B cell (primary cell): ENCODE measurements at regions of chr2 and their contacts with region 1.

Region 1: DNA sequence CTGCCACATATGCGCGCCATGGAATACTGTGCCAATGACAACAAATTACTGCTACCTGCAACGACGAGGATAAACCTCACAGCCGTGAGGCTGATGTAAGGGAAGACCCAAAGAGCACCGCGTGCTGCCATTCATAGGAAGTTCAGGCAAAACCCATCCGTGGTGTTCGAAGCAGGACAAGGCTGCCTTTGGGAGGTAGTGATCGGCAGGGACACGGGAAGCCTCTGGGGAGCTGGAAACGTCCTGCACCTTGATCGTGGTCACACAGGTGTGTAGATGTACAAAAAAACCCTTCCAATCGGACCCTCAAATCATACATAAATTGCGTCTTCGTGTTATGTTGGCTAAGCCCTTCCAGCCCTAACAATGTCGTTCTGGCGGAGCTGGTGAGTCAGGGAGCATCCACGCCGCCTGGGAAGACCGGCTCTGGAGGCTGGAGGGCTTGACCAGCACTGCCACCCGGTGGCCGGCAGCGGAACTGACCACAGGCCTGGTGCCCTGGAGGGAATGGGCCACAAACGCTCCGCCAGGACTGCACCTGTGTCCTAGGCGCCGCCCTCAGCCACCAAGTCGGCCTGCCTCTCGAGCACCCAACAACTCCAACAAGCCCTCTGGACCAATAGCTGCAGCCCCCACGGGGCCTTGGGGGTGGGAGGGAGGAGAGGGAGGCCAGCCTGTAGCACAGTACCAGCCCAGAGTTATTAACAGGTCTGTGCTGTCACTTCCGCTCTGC is 4.1 kb upstream of the NEURL3 start:
- DNase-seq: peak; percentile 78
- ATAC-seq: peak; percentile 67
- H3K4me3 ChIP-seq: no peak overlapping the region
- H3K4me3 Mint-ChIP-seq: peak overlapping the region; percentile 78
- H3K27ac ChIP-seq: no peak overlapping the region
- H3K27ac Mint-ChIP-seq: no peak overlapping the region
- H3K4me1 ChIP-seq: peaks cover 18 to 23% of the 10 kb centered on the region in 2 donors
- H3K4me1 Mint-ChIP-seq: peaks cover 18% of the 10 kb centered on the region
- H3K27me3 ChIP-seq: peaks cover 0 to 16% (median 0%) of the 10 kb centered on the region in 4 experiments
- H3K27me3 Mint-ChIP-seq: peaks cover 14% of the 10 kb centered on the region
- CTCF ChIP-seq: peak; percentile 75

Region 2: DNA sequence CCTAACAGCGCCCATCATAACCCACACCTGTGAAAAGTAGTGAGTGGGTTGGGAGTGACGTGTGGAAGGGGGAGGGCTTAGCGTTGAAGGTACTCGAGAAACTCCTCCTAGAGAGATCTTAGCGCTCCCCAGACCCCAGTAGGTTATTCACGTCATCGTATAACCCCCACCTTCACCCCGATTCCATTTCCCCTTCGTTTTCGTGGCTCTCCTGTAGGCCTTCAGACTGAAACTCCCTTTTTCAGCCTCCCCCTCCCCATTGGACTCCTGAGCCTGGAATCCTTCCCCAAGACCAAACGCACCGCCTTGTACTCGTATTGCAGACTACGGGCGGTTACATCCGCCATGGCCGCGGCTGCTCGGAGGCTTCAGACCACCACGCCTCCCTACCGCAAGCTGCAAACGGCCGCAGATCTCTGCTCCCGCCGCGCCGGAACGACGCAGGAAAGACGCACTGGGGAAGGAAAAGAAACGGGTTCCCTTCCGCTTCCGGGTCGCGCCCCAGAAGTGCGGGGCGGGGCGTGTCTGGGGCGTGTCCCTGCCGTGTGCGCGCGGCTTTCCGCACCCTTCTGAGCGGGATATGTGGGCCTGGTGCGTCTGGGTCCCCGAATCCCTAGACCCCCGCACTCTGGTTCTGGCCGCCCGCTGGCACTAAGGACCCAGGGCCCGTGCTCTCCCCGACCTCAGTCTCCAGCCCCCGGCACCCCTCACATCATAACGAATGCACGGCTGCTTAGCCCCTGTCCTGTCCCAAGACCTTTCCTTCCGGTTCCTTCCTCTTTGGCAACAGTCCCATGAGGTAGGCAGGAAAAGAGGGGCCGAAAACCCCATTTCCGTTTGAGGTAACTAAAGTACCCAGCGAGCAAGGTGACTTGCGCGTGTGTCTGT is 203.9 kb before region 1 on chr2 and contains the start of gene SNRNP200:
- CTCF ChIA-PET with region 1: interaction called, 6 read pairs
- POLR2A ChIA-PET with region 1: interaction called, 4 read pairs
- intact Hi-C with region 1: loop called (anchors 1 kb)
- DNase-seq: peak; percentile 93
- ATAC-seq: peak; percentile 96
- H3K4me3 ChIP-seq: peak within 1 kb of the TSS; percentile 70 to 97 (median 80)
- H3K4me3 Mint-ChIP-seq: peak within 1 kb of the TSS; percentile 99
- H3K27ac ChIP-seq: peak within 1 kb of the TSS; percentile 89 to 91
- H3K27ac Mint-ChIP-seq: peak within 1 kb of the TSS; percentile 99
- H3K4me1 ChIP-seq: peaks cover 18 to 22% of the 10 kb centered on the region in 2 donors
- H3K4me1 Mint-ChIP-seq: peaks cover 51% of the 10 kb centered on the region
- H3K27me3 ChIP-seq: no peaks in the 10 kb centered on the region
- H3K27me3 Mint-ChIP-seq: no peaks in the 10 kb centered on the region
- CTCF ChIP-seq: no peak
- total RNA-seq, gene SNRNP200: 214 and 216 TPM in 2 replicates

Region 3: GRCh38 chr2:96407041-96407918 is 102.0 kb before region 1 on chr2:
- CTCF ChIA-PET with region 1: interaction called, 155 read pairs
- POLR2A ChIA-PET with region 1: no interaction called
- intact Hi-C with region 1: loop called (anchors 1 kb)
- DNase-seq: peak; percentile 79
- ATAC-seq: peak; percentile 88
- H3K4me3 ChIP-seq: peak overlapping the region in 1 of 5 experiments; percentile 6
- H3K4me3 Mint-ChIP-seq: no peak overlapping the region
- H3K27ac ChIP-seq: no peak overlapping the region
- H3K27ac Mint-ChIP-seq: no peak overlapping the region
- H3K4me1 ChIP-seq: peaks cover 7 to 9% of the 10 kb centered on the region in 2 donors
- H3K4me1 Mint-ChIP-seq: peaks cover 9% of the 10 kb centered on the region
- H3K27me3 ChIP-seq: no peaks in the 10 kb centered on the region
- H3K27me3 Mint-ChIP-seq: peaks cover 3% of the 10 kb centered on the region
- CTCF ChIP-seq: peak; percentile 85

Region 4: GRCh38 chr2:96470636-96471035 is 38.6 kb before region 1 on chr2:
- CTCF ChIA-PET with region 1: interaction called, 7 read pairs
- POLR2A ChIA-PET with region 1: no interaction called
- intact Hi-C with region 1: loop called (anchors 2 kb)
- DNase-seq: peak; percentile 58
- ATAC-seq: peak; percentile 61
- H3K4me3 ChIP-seq: no peak overlapping the region
- H3K4me3 Mint-ChIP-seq: no peak overlapping the region
- H3K27ac ChIP-seq: no peak overlapping the region
- H3K27ac Mint-ChIP-seq: no peak overlapping the region
- H3K4me1 ChIP-seq: peaks cover 3 to 6% of the 10 kb centered on the region in 2 donors
- H3K4me1 Mint-ChIP-seq: peaks cover 2% of the 10 kb centered on the region
- H3K27me3 ChIP-seq: peaks cover 0 to 13% (median 8%) of the 10 kb centered on the region in 4 experiments
- H3K27me3 Mint-ChIP-seq: peaks cover 7% of the 10 kb centered on the region
- CTCF ChIP-seq: peak; percentile 75

Region 5: DNA sequence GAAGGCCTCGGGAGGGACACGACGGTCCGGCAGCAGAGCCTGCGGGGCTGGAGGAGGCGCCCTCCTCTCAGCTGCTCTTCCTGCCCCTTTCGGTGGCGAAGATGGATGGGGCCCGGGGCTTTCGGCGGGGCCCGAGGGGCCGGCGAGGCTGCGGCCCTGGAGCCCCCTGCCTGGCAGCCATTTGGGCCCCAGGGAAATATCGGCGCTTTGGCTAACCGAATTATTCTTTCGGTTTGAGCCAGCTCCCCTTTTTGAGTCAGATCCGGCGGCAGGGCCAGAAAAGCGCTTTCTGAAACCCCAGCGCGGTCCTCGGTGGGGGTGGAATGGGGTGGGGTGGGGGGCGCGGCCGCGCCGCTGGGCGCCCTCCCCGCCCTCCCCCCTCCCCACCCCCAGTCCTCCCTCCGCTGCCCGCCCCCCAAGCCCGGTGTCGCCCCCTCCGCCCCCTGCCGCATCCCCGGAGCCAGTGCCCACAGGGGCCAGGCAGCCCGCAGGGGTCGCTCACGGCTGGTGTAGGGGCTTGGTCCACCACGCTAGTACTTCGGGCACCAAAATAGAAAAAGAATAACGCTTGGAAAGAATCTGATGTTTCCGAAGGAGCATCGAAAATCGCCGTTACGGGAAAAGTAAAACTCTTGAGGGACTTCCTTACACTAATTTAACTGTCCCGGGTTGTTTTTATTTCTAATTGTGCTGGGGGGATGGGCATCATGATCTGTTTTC is 18.2 kb after region 1 on chr2:
- CTCF ChIA-PET with region 1: interaction called, 15 read pairs
- POLR2A ChIA-PET with region 1: no interaction called
- intact Hi-C with region 1: no loop called
- DNase-seq: peak; percentile 66
- ATAC-seq: peak; percentile 32
- H3K4me3 ChIP-seq: peak overlapping the region; percentile 31 to 75 (median 64)
- H3K4me3 Mint-ChIP-seq: peak overlapping the region; percentile 87
- H3K27ac ChIP-seq: peak overlapping the region in 1 of 2 donors; percentile 60
- H3K27ac Mint-ChIP-seq: peak overlapping the region; percentile 78
- H3K4me1 ChIP-seq: peaks cover 21 to 47% of the 10 kb centered on the region in 2 donors
- H3K4me1 Mint-ChIP-seq: peaks cover 48% of the 10 kb centered on the region
- H3K27me3 ChIP-seq: peaks cover 0 to 17% (median 0%) of the 10 kb centered on the region in 4 experiments
- H3K27me3 Mint-ChIP-seq: peaks cover 4% of the 10 kb centered on the region
- CTCF ChIP-seq: peak; percentile 50

Region 6: DNA sequence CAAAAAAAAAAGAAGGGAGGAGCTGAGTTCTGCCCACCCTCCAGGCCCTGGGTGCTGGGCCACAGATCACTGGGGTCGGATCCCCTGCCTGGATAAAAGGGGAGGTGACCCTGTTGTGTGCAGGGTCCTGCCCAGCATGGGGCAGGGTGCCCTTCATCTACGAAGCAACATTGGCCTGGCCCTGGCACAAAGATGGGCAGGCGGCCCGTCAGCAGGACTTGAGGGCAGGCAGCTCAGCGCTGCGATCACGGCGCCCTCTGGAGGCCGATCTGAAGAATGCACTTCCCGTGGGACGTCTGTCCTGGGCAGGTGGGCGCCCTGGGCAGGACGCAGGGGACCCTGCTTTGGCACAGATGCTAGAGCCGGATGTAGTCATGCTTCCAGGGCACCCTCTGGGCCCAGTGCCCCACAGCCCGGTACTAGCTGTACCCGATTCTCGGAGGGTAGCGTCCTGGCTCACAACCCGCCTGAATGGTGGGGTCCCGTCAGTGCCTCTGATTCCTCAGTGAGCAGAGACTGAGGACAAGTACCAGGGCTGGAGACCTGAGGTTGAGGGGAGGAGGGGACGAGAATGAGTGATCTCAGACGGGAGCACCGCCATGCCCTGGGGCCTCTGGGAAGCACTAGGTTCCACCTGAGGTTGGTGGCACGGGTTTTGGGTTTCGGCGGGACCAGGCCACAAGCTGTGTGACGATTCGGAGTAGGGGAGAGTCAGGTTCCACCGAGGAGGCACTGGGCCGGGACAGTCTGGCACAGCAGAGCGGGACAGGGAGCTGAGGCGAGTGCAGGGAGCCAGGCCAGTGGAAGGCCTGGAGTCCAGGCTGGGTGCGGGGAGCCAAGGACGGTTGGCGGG is 45.2 kb after region 1 on chr2:
- CTCF ChIA-PET with region 1: interaction called, 24 read pairs
- POLR2A ChIA-PET with region 1: no interaction called
- intact Hi-C with region 1: loop called (anchors 1 kb)
- DNase-seq: peak; percentile 86
- ATAC-seq: peak; percentile 83
- H3K4me3 ChIP-seq: no peak overlapping the region
- H3K4me3 Mint-ChIP-seq: peak overlapping the region; percentile 16
- H3K27ac ChIP-seq: no peak overlapping the region
- H3K27ac Mint-ChIP-seq: peak overlapping the region; percentile 10
- H3K4me1 ChIP-seq: peaks cover 6 to 11% of the 10 kb centered on the region in 2 donors
- H3K4me1 Mint-ChIP-seq: peaks cover 15% of the 10 kb centered on the region
- H3K27me3 ChIP-seq: no peaks in the 10 kb centered on the region
- H3K27me3 Mint-ChIP-seq: no peaks in the 10 kb centered on the region
- CTCF ChIP-seq: peak; percentile 99